Activated T-helper 2 cell treated with anti-CD3 and anti-CD28 coated beads, Interferon-gamma antibody, Interleukin-2, Interleukin-4, amounts not matched to agents 10 μg/mL and 5 μg/mL and 100 μg/mL, durations not matched to agents 14 hours and 24 hours and 36 hours (primary cell): ENCODE measurements at regions of chr21 and their contacts with region 1.

Region 1: DNA sequence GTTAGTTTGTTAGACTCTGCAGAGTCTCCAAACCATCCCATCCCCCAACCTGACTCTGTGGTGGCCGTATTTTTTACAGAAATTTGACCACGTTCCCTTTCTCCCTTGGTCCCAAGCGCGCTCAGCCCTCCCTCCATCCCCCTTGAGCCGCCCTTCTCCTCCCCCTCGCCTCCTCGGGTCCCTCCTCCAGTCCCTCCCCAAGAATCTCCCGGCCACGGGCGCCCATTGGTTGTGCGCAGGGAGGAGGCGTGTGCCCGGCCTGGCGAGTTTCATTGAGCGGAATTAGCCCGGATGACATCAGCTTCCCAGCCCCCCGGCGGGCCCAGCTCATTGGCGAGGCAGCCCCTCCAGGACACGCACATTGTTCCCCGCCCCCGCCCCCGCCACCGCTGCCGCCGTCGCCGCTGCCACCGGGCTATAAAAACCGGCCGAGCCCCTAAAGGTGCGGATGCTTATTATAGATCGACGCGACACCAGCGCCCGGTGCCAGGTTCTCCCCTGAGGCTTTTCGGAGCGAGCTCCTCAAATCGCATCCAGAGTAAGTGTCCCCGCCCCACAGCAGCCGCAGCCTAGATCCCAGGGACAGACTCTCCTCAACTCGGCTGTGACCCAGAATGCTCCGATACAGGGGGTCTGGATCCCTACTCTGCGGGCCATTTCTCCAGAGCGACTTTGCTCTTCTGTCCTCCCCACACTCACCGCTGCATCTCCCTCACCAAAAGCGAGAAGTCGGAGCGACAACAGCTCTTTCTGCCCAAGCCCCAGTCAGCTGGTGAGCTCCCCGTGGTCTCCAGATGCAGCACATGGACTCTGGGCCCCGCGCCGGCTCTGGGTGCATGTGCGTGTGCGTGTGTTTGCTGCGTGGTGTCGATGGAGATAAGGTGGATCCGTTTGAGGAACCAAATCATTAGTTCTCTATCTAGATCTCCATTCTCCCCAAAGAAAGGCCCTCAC is at the start of gene OLIG2:
- DNase-seq: no peak
- H3K4me3 Mint-ChIP-seq: no peak within 1 kb of the TSS
- H3K27ac Mint-ChIP-seq: peak within 1 kb of the TSS; percentile 31
- H3K4me1 Mint-ChIP-seq: peaks cover 14% of the 10 kb centered on the region
- H3K27me3 Mint-ChIP-seq: peaks cover 85% of the 10 kb centered on the region
- total RNA-seq, gene OLIG2: not detected in 2 replicates

Region 2: GRCh38 chr21:33069976-33070811 is 44.4 kb after region 1 on chr21 and contains the start of gene OLIG1:
- intact Hi-C with region 1: loop called (anchors 2 kb)
- DNase-seq: peak; percentile 16
- H3K4me3 Mint-ChIP-seq: peak within 1 kb of the TSS; percentile 67
- H3K27ac Mint-ChIP-seq: no peak within 1 kb of the TSS
- H3K4me1 Mint-ChIP-seq: peaks cover 13% of the 10 kb centered on the region
- H3K27me3 Mint-ChIP-seq: peaks cover 79% of the 10 kb centered on the region
- total RNA-seq, gene OLIG1: 0.09 TPM in 1 of 2 replicates, not detected in the other

Region 3: GRCh38 chr21:33127154-33127893 is 101.6 kb after region 1 on chr21:
- intact Hi-C with region 1: loop called (anchors 10 kb)
- DNase-seq: peak; percentile 33
- H3K4me3 Mint-ChIP-seq: peak overlapping the region; percentile 38
- H3K27ac Mint-ChIP-seq: no peak overlapping the region
- H3K4me1 Mint-ChIP-seq: no peaks in the 10 kb centered on the region
- H3K27me3 Mint-ChIP-seq: peaks cover 34% of the 10 kb centered on the region